Activated CD8-positive, alpha-beta memory T cell treated with anti-CD3 and anti-CD28 coated beads, Interleukin-2, amount 10 ng/mL, durations not matched to agents 7 days and 5 days (primary cell): ENCODE measurements at regions of chr9 and their contacts with region 1.

Region 1: DNA sequence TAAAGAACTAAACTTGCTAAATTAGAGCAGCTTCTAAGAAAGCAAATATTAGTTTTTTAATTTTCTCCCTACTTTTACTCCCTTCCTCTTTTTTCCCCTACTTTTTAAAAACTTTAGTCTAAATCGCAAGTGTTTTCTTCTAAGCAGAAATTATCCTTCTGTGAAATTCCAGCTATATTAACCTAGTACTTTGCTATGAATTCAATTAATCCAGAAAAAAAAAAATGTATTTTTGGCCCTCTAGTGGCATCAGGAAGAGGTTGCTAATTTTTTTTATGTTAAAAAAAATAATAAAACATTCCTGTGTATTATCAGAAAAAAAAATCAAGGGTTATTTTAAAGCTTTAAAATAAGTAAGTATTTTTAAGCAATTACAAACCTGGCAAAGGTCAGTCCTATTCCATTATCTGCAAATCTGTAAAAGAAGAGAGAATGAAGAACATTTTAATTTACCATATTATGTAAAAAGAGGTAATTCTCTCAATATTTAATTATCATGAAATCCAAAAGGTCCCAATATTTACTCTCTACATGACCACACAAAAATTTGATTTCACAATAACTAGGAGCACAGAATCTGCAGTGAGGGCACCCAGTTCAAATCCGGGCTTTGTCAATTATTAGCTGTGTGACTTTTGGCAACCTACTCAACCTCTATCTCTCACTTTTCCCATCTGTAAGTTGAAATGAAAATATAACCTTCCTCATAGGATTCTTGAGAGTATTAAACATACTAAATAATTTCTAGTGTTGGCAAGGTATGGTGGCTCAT is 52.0 kb downstream of the CEMIP2 start:
- DNase-seq: no peak
- ATAC-seq: no peak
- H3K4me3 Mint-ChIP-seq: no peak overlapping the region
- H3K27ac Mint-ChIP-seq: no peak overlapping the region
- H3K4me1 Mint-ChIP-seq: no peaks in the 10 kb centered on the region
- H3K27me3 Mint-ChIP-seq: no peaks in the 10 kb centered on the region

Region 2: DNA sequence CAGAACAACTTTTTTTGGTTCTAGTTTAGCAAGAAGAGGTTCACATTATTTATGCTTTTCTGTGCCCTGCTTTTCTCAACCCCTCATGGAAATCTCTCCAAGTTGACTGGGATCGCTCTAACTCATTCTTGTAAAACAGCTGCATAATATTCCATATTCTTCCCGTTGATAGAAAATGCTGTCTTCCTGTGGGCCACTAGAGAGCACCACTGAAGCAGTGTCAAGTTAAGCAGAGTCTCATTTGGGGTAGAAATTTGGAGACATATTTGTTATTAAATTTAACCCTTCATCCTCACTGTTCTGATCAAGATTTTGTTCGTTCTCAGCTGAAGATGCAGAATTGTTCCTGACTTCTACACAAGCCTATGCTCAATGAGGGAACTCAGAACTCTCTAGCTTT is 88.1 kb before region 1 on chr9:
- CTCF ChIA-PET with region 1: interaction called, 32 read pairs
- DNase-seq: no peak
- ATAC-seq: peak; percentile 70
- H3K4me3 Mint-ChIP-seq: no peak overlapping the region
- H3K27ac Mint-ChIP-seq: no peak overlapping the region
- H3K4me1 Mint-ChIP-seq: peaks cover 35% of the 10 kb centered on the region
- H3K27me3 Mint-ChIP-seq: peaks cover 6% of the 10 kb centered on the region

Region 3: GRCh38 chr9:71683598-71684235 is 32.6 kb before region 1 on chr9:
- CTCF ChIA-PET with region 1: interaction called, 13 read pairs
- DNase-seq: no peak
- ATAC-seq: no peak
- H3K4me3 Mint-ChIP-seq: no peak overlapping the region
- H3K27ac Mint-ChIP-seq: peak overlapping the region; percentile 78
- H3K4me1 Mint-ChIP-seq: peaks cover 32% of the 10 kb centered on the region
- H3K27me3 Mint-ChIP-seq: no peaks in the 10 kb centered on the region

Region 4: DNA sequence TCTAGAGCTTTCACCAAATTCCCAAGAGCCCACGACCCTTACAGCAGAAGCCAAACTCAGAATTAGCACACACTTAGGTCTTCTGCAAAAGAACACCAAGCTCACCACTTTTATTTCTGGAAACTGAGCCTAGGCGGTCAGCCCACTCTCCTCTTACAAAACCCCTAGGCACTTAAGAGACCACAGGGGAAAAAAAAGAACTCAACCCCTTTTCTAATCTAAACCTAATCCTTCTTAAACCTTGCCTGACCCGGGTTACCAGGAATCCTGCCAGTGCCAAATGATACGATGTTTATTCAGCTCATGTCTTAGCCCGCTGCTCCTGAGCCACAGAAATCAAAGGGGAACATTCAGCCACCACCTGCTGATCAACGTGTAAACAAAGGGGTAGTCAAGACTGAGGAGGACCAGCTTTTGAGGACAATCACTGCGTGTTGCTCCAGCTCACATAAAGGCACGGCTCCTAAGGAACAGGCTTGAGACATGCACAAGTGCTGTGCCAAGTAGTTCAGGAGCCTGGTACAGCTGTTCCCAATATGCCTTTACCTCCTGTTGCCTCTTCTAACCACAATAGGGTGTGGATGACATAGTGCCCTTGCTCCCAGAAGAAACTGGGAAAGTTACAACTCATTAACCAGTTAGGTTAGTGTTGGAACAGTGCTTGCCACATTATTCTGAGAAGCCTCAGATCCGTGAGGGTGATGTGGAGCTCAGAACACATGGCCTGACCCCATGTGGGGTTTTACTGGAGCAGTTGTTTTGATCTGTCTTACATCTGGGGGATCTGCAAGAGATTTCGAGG is 599.4 kb after region 1 on chr9:
- CTCF ChIA-PET with region 1: no interaction called
- DNase-seq: no peak
- ATAC-seq: no peak
- H3K4me3 Mint-ChIP-seq: no peak overlapping the region
- H3K27ac Mint-ChIP-seq: no peak overlapping the region
- H3K4me1 Mint-ChIP-seq: no peaks in the 10 kb centered on the region
- H3K27me3 Mint-ChIP-seq: peaks cover 2% of the 10 kb centered on the region